Stomach (tissue), 19 donors: ENCODE measurements at regions of chr18 and their contacts with region 1.

Region 1: DNA sequence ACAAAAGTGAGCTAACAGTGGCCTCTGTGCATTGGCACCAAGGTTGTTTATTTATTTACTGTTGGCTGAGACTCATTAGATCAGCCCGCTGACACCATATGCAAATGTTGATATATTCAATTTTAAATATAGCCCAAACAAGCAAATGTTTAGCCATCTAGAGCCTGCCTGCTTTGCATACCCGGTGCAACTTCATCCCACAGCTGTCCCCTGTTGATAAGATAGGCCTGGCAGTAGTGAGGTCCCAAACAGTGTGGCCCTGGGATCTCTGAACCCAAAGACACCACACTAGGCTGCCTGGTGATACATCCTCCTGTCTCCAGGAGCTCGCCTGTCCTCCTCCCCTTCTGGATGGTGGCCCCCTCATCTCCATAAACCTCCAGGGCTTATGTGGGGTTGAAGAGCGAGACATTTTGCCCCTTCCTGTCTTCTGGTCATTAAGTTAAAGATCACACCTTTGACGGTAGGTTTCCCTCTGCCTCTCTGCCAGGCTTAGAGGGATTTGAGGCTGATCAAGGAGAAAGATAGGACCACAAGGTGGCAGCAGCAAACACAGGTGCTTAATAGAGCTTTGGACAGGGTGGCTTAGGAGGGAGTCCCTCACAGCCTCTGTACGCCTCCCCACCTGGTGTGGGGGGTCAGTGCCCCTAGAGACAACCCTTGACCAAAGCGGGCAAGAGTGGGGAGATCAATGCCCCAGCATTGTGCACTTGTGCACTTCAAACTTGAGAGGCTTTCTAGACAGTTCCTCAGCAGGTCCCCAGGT is 23.7 kb upstream of the MYO5B start:
- DNase-seq: peak; percentile 49 to 56
- H3K4me3 ChIP-seq: no peak overlapping the region
- H3K27ac ChIP-seq: no peak overlapping the region
- H3K4me1 ChIP-seq: no peaks in the 10 kb centered on the region
- H3K27me3 ChIP-seq: peaks cover 0 to 13% (median 0%) of the 10 kb centered on the region in 3 donors
- CTCF ChIP-seq: peak in 4 of 7 experiments; percentile 13 to 44 (median 40)
- EP300 ChIP-seq: no peak
- POLR2A ChIP-seq: no peak

Region 2: DNA sequence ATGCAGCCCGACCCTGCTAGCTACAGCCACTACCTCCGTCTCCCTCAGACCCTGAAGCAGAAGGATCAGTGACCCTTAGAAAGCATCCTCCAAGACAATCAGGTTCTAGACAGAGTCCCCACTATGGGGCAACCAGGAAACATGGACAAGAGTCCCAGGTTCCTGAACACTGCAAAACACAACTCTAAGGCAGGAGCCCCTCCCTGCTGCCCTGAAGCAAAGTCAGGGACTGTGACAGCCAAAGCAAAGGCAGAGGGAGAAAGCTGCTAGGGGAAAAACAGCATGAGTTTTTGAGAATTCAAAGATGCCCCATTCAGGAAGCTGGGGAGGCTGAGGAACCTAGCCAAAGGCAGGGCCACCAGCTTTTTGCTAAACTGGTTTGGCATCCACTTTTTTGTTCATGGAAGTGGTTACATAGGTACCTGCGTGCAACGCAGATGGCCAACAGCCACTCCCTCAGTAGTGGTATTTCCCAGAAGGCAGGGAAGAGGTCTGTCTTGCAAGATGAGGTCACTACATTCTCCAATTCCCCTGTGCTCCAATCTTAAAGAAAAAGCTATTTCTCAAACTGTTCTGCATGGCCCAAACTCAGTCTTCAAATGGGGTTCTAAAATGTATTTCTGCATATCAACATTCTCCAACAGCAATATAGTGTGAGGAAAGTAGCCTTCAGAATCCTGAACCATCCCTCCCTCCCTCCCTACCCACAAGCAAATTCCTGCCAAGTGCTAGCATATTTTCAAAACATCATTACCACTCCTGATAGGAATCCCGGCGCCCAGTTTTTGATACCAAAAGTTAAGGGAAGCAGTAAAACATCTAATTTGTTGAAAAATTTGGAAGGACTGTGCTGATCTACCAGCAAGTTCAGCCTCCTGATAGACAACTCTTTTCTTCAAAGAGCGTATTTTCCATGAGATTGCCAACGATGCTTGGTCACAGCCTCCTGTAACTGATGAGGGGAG is 56.7 kb before region 1 on chr18:
- intact Hi-C with region 1: no loop called
- DNase-seq: peak in 1 of 2 donors; percentile 57
- H3K4me3 ChIP-seq: no peak overlapping the region
- H3K27ac ChIP-seq: no peak overlapping the region
- H3K4me1 ChIP-seq: peaks cover 0 to 30% (median 14%) of the 10 kb centered on the region in 4 donors
- H3K27me3 ChIP-seq: peaks cover 0 to 12% (median 0%) of the 10 kb centered on the region in 3 donors
- CTCF ChIP-seq: no peak
- EP300 ChIP-seq: no peak
- POLR2A ChIP-seq: no peak

Region 3: GRCh38 chr18:50356036-50356945 is 137.7 kb after region 1 on chr18:
- intact Hi-C with region 1: loop called (anchors 10 kb)
- DNase-seq: peak in 1 of 2 donors; percentile 16
- H3K4me3 ChIP-seq: no peak overlapping the region
- H3K27ac ChIP-seq: no peak overlapping the region
- H3K4me1 ChIP-seq: peaks cover 0 to 13% (median 0%) of the 10 kb centered on the region in 4 donors
- H3K27me3 ChIP-seq: peaks cover 0 to 33% (median 0%) of the 10 kb centered on the region in 3 donors
- CTCF ChIP-seq: no peak
- EP300 ChIP-seq: no peak
- POLR2A ChIP-seq: no peak